ENCODE measurements at regions of chr12 and their contacts with region 1.

Region 1: DNA sequence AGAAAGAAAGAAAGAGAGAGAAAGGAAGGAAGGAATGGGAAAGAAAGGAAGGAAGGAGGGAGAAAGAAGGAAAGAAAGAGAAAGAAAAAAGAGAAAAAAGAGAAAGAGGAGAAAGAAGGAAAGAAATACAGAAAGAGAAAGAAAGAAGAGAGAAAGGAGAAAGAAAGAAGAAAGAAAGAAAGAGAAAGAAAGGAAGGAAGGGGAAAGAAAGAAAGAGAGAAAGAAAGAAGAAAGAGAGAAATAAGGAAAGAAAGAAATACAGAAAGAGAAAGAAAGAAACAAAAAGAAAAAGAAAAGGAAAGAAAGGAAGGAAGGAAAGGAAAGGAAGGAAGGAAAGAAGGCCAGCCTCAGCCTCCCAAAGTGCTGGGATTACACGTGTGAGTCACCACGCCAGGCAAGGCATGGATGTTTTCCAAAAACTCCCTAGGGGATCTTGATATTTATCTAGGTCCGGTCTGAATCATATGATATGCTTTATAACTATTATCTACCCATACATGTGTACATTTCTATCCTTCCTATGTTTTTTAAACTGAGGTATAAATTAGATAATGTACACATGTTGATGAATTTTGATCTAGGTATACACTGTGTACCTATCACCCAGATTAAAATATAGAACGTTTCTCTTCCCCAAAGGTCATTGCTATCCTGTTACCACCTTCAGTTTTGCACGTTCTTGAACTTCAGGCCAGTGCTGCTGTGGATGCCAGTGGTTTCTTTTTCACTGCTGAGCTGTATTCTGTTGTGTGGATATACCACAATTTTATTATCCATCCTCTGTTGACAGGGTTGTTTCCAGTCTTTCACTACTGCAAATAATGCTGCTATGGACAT is 177.9 kb downstream of the RBM19 start:
- DNase-seq: no peak
- H3K4me3 ChIP-seq: no peak overlapping the region
- H3K27ac ChIP-seq: no peak overlapping the region
- H3K4me1 ChIP-seq: peaks cover 19% of the 10 kb centered on the region
- H3K27me3 ChIP-seq: no peaks in the 10 kb centered on the region
- CTCF ChIP-seq: no peak

Region 2: GRCh38 chr12:113403435-113404415 is 384.5 kb before region 1 on chr12 and contains the start of gene SDS:
- CTCF ChIA-PET with region 1: no interaction called
- POLR2A ChIA-PET with region 1: interaction called, 14 read pairs
- intact Hi-C with region 1: no loop called
- DNase-seq: no peak
- H3K4me3 ChIP-seq: no peak within 1 kb of the TSS
- H3K27ac ChIP-seq: no peak within 1 kb of the TSS
- H3K4me1 ChIP-seq: no peaks in the 10 kb centered on the region
- H3K27me3 ChIP-seq: no peaks in the 10 kb centered on the region
- CTCF ChIP-seq: no peak
- total RNA-seq, gene SDS: not detected in 2 replicates

Region 3: GRCh38 chr12:113990250-113991223 is 202.3 kb after region 1 on chr12:
- CTCF ChIA-PET with region 1: no interaction called
- POLR2A ChIA-PET with region 1: no interaction called
- intact Hi-C with region 1: no loop called
- DNase-seq: no peak
- H3K4me3 ChIP-seq: no peak overlapping the region
- H3K27ac ChIP-seq: no peak overlapping the region
- H3K4me1 ChIP-seq: no peaks in the 10 kb centered on the region
- H3K27me3 ChIP-seq: peaks cover 79% of the 10 kb centered on the region
- CTCF ChIP-seq: no peak

Measured in PC-9 (cell line).